CD4-positive, alpha-beta memory T cell (primary cell): ENCODE measurements at regions of chr15 and their contacts with region 1.

Region 1: GRCh38 chr15:65804252-65804931 is 12.3 kb upstream of the DENND4A start:
- DNase-seq: no peak
- H3K4me3 ChIP-seq: no peak overlapping the region
- H3K4me3 Mint-ChIP-seq: no peak overlapping the region
- H3K27ac ChIP-seq: no peak overlapping the region
- H3K27ac Mint-ChIP-seq: peak overlapping the region in 6 of 7 donors; percentile 48 to 91 (median 68)
- H3K4me1 ChIP-seq: peaks cover 41% of the 10 kb centered on the region
- H3K4me1 Mint-ChIP-seq: peaks cover 14 to 31% (median 26%) of the 10 kb centered on the region in 4 donors
- H3K27me3 ChIP-seq: no peaks in the 10 kb centered on the region
- H3K27me3 Mint-ChIP-seq: no peaks in the 10 kb centered on the region

Region 2: DNA sequence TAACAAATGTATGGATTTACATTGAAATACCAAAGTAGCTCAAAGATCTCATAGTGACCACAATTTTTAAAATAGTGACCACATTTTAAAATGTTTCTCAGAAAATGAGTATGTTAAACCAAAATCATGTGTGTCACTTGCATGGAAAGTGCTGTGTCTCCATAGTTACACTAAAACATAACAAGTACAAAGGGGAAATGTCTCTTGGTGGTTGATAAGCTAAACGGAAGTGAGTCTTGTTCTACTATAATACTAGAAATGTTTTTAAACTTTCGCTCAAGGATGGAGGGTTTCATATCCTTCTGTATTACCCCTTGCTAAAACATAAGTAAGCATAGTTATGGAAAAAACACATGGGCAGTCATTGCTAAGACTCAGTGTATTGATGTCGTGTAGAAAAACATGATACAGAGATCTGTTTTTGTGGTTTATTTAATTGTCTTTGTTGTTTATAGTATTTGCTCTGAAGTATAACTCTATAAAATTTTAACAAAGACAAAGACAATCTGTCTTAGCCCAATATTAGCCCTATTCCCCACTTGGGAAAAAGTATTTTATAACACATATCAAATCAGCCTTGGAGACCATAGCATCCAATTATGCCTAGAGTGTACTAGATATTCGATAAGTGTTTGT is 14.7 kb after region 1 on chr15:
- CTCF ChIA-PET with region 1: interaction called, 7 read pairs
- POLR2A ChIA-PET with region 1: interaction called, 43 read pairs
- intact Hi-C with region 1: no loop called
- DNase-seq: peak; percentile 69 to 93 (median 89)
- H3K4me3 ChIP-seq: peak overlapping the region in 1 of 2 donors; percentile 17
- H3K4me3 Mint-ChIP-seq: peak overlapping the region; percentile 32 to 77 (median 74)
- H3K27ac ChIP-seq: peak overlapping the region; percentile 85
- H3K27ac Mint-ChIP-seq: peak overlapping the region; percentile 90 to 99 (median 96)
- H3K4me1 ChIP-seq: peaks cover 62% of the 10 kb centered on the region
- H3K4me1 Mint-ChIP-seq: peaks cover 35 to 63% (median 50%) of the 10 kb centered on the region in 4 donors
- H3K27me3 ChIP-seq: no peaks in the 10 kb centered on the region
- H3K27me3 Mint-ChIP-seq: no peaks in the 10 kb centered on the region